K562 (cell line): ENCODE measurements at regions of chr12 and their contacts with region 1.

Region 1: DNA sequence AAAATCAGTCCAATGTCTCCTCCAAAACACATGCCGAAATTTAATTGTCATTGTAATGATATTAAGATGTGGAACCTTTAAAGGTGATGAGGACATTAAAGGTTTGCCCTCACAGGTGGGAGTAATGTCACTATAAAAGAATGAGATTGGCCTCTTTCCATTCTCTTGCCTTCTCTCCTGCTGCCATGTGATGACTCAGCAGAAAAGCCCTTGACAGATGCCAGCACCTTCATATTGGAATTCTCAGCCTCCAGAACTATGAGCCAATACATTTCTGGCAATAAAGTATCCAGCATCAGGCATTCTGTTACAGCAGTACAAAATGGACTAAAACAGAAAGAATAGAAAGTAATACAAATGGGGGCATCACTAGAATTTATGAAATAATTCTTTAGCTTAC is 609.7 kb downstream of the SLC16A7 start:
- DNase-seq: peak in 1 of 4 experiments; percentile 17
- ATAC-seq: no peak
- H3K4me3 ChIP-seq: no peak overlapping the region
- H3K27ac ChIP-seq: no peak overlapping the region
- H3K4me1 ChIP-seq: peaks cover 0 to 3% of the 10 kb centered on the region in 2 experiments; a peak in 1 of 5 replicates
- H3K27me3 ChIP-seq: no peaks in the 10 kb centered on the region
- CTCF ChIP-seq: no peak
- EP300 ChIP-seq: no peak
- POLR2A ChIP-seq: no peak
- RAD21 ChIP-seq: no peak

Region 2: DNA sequence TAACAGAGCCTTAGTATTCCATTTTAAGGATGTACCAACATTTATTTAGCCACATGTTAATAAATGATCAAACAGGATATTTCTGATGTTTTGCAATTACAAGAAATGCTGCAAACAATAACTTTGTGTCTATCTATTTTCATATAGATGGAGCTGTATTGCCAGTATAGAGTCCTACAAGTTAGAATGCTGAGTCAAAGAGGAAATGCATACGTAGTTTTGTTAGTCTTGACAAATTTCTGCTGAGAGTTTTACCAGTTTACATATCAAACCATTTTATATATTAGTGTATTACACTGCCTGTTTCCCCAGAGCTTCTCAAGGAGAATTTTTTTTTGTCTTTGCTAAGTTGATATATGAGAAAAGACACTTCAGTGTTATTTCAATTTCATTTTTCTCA is 68.0 kb before region 1 on chr12:
- CTCF ChIA-PET with region 1: no interaction called
- POLR2A ChIA-PET with region 1: no interaction called
- in situ Hi-C with region 1: no loop called
- intact Hi-C with region 1: loop called (anchors 5 kb)
- DNase-seq: no peak
- ATAC-seq: peak; percentile 63
- H3K4me3 ChIP-seq: no peak overlapping the region
- H3K27ac ChIP-seq: peak overlapping the region; percentile 43; the same call in 1 of the 3 replicates
- H3K4me1 ChIP-seq: no peaks in the 10 kb centered on the region; a peak in 2 of 5 replicates
- H3K27me3 ChIP-seq: no peaks in the 10 kb centered on the region
- CTCF ChIP-seq: no peak
- EP300 ChIP-seq: no peak
- POLR2A ChIP-seq: no peak
- RAD21 ChIP-seq: no peak

Region 3: GRCh38 chr12:60240891-60241290 is 35.4 kb after region 1 on chr12:
- CTCF ChIA-PET with region 1: no interaction called
- POLR2A ChIA-PET with region 1: no interaction called
- in situ Hi-C with region 1: no loop called
- intact Hi-C with region 1: loop called (anchors 5 kb)
- DNase-seq: no peak
- ATAC-seq: no peak; the same call in 2 of the 3 replicates
- H3K4me3 ChIP-seq: no peak overlapping the region
- H3K27ac ChIP-seq: no peak overlapping the region
- H3K4me1 ChIP-seq: no peaks in the 10 kb centered on the region; a peak in 1 of 5 replicates
- H3K27me3 ChIP-seq: no peaks in the 10 kb centered on the region
- CTCF ChIP-seq: no peak
- EP300 ChIP-seq: no peak
- POLR2A ChIP-seq: no peak
- RAD21 ChIP-seq: no peak